ENCODE measurements at regions of chr7 and their contacts with region 1.

Region 1: GRCh38 chr7:120950539-120951308 is at the start of gene ING3:
- DNase-seq: peak; percentile 99
- ATAC-seq: peak; percentile 91
- H3K4me3 ChIP-seq: peak within 1 kb of the TSS; percentile 71 to 99 (median 83)
- H3K4me3 Mint-ChIP-seq: peak within 1 kb of the TSS; percentile 99
- H3K27ac ChIP-seq: peak within 1 kb of the TSS; percentile 95 to 96
- H3K27ac Mint-ChIP-seq: peak within 1 kb of the TSS; percentile 99
- H3K4me1 ChIP-seq: peaks cover 14 to 15% of the 10 kb centered on the region in 2 donors
- H3K4me1 Mint-ChIP-seq: peaks cover 20% of the 10 kb centered on the region
- H3K27me3 ChIP-seq: no peaks in the 10 kb centered on the region
- H3K27me3 Mint-ChIP-seq: peaks cover 3% of the 10 kb centered on the region
- CTCF ChIP-seq: no peak
- total RNA-seq, gene ING3: 38.0 and 41.7 TPM in 2 replicates

Region 2: DNA sequence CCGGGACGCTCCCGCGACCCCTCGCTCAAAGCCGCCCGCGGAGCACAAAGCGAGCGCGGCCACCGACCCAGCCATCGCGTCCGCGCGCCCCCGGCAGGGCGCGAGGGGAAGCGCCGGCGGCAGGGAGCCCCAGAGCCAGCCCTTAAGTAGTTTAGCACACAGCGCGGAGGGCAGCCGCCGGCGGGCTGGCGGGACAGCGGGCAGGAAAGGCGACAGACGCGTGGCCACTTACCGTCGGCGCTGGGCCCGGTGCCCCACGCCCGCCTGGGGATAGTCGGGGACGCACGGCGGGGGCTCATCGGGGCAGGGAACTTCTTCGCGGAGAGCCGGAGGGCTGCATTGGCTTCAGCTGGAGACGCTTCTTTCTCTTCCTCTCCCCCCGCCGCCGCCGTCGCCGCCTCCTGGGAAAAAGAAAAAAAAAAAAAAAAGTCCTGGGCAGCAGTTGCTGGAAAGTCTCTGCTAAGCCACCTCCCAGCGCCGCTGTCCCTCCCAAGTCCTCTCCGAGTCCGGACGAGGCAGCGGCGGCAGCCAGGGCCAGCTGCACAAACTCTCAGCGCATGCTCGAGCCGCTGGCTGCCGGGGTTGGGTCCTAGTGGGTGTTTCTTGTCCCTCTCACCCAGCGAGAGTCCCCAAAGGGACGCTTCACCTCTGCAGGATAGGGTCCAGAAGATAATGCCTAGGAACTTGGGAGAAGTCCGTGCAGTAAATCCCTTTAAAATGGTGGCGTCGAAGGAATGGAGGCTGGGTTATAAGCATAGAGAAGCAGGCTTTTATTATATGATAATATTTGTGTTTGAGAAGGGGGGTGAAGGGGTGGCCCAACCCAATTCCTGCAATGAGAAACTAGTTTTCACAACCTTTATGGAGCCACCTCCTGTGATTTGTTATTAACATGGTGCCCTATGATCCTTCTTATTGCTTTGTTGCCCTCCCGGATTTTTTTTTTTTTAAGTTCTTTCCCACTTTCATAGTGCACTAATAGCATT is 92.8 kb before region 1 on chr7 and contains the start of gene TSPAN12:
- CTCF ChIA-PET with region 1: no interaction called
- POLR2A ChIA-PET with region 1: no interaction called
- intact Hi-C with region 1: loop called (anchors 1 kb)
- DNase-seq: peak; percentile 68
- ATAC-seq: peak; percentile 81
- H3K4me3 ChIP-seq: peak within 1 kb of the TSS; percentile 21 to 73 (median 51)
- H3K4me3 Mint-ChIP-seq: peak within 1 kb of the TSS; percentile 93
- H3K27ac ChIP-seq: no peak within 1 kb of the TSS
- H3K27ac Mint-ChIP-seq: no peak within 1 kb of the TSS
- H3K4me1 ChIP-seq: peaks cover 13 to 16% of the 10 kb centered on the region in 2 donors
- H3K4me1 Mint-ChIP-seq: peaks cover 16% of the 10 kb centered on the region
- H3K27me3 ChIP-seq: peaks cover 0 to 43% (median 26%) of the 10 kb centered on the region in 4 experiments
- H3K27me3 Mint-ChIP-seq: peaks cover 68% of the 10 kb centered on the region
- CTCF ChIP-seq: peak; percentile 79
- total RNA-seq, gene TSPAN12: not detected in 2 replicates

Region 3: DNA sequence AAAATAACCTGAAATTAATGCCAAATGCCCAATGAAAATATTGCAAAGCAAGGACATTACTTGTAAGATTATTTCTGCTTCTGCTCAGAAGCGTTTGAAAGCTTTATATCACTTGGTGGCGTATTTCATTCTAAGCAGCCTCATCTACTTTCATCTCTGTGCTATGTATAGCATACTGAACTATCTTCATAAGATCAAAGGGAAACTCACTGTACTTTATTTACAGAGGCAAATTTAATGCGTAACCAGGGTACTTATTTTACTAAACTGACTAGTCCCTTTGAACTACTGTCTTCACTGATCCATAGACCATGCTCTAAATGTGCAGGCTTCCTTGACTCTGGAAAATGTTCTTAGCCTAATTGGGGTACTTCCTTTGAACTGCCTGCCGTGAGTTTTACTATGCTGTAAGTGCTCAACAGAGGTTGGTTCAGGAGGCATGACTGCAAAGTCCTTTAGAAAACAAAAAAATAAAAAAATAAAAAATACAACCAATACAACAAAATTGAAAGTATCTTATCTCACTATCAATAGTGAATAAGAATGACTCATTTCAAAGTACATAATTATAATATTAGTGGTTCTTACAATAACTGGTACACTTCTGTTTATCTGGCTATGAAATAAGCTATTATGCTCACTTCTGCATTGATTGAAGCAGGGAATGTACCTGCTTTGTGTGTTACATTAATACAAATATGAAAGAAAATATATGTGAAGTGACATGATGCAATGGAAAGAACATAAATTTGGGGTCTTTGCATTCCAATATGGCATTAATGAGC is 51.8 kb before region 1 on chr7:
- CTCF ChIA-PET with region 1: no interaction called
- POLR2A ChIA-PET with region 1: no interaction called
- intact Hi-C with region 1: no loop called
- DNase-seq: no peak
- ATAC-seq: no peak
- H3K4me3 ChIP-seq: no peak overlapping the region
- H3K4me3 Mint-ChIP-seq: no peak overlapping the region
- H3K27ac ChIP-seq: no peak overlapping the region
- H3K27ac Mint-ChIP-seq: no peak overlapping the region
- H3K4me1 ChIP-seq: no peaks in the 10 kb centered on the region
- H3K4me1 Mint-ChIP-seq: no peaks in the 10 kb centered on the region
- H3K27me3 ChIP-seq: no peaks in the 10 kb centered on the region
- H3K27me3 Mint-ChIP-seq: peaks cover 34% of the 10 kb centered on the region
- CTCF ChIP-seq: no peak

Region 4: GRCh38 chr7:120979765-120980499 is 29.2 kb after region 1 on chr7:
- CTCF ChIA-PET with region 1: no interaction called
- POLR2A ChIA-PET with region 1: interaction called, 11 read pairs
- intact Hi-C with region 1: no loop called
- DNase-seq: no peak
- ATAC-seq: no peak
- H3K4me3 ChIP-seq: no peak overlapping the region
- H3K4me3 Mint-ChIP-seq: no peak overlapping the region
- H3K27ac ChIP-seq: no peak overlapping the region
- H3K27ac Mint-ChIP-seq: no peak overlapping the region
- H3K4me1 ChIP-seq: no peaks in the 10 kb centered on the region
- H3K4me1 Mint-ChIP-seq: no peaks in the 10 kb centered on the region
- H3K27me3 ChIP-seq: peaks cover 0 to 4% (median 0%) of the 10 kb centered on the region in 4 experiments
- H3K27me3 Mint-ChIP-seq: peaks cover 5% of the 10 kb centered on the region
- CTCF ChIP-seq: no peak

Measured in B cell (primary cell).